ENCODE measurements at regions of chr13 and their contacts with region 1.

Region 1: GRCh38 chr13:97855570-97856303 is 97.7 kb upstream of the IPO5 start:
- DNase-seq: peak; percentile 37
- H3K4me3 ChIP-seq: no peak overlapping the region
- H3K27ac ChIP-seq: no peak overlapping the region
- H3K4me1 ChIP-seq: no peaks in the 10 kb centered on the region
- H3K27me3 ChIP-seq: no peaks in the 10 kb centered on the region
- CTCF ChIP-seq: peak; percentile 64

Region 2: DNA sequence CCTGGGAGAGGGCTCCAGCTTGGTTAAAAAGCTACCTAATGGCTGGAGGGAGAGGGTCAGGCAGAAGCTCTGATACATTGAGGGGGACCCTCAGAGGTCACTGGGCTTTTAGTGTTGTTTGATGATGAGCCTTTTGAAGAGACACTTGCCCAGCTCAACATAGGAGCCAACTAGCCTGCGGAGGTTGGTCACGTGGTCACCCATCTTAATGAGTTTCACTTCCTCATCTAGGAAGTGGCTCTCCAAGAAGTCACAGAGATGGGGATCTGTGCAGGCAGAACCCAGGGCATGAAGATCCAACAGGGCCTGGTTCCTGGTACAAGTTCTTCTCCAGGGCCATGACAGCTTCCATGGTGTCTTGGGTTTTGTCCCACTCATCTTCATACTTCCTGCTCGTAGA is 131.1 kb after region 1 on chr13:
- intact Hi-C with region 1: no loop called
- DNase-seq: no peak
- H3K4me3 ChIP-seq: no peak overlapping the region
- H3K27ac ChIP-seq: no peak overlapping the region
- H3K4me1 ChIP-seq: no peaks in the 10 kb centered on the region
- H3K27me3 ChIP-seq: no peaks in the 10 kb centered on the region
- CTCF ChIP-seq: no peak

Region 3: GRCh38 chr13:98133946-98134345 is 278.2 kb after region 1 on chr13:
- intact Hi-C with region 1: loop called (anchors 10 kb)
- DNase-seq: no peak
- H3K4me3 ChIP-seq: no peak overlapping the region
- H3K27ac ChIP-seq: no peak overlapping the region
- H3K4me1 ChIP-seq: no peaks in the 10 kb centered on the region
- H3K27me3 ChIP-seq: no peaks in the 10 kb centered on the region
- CTCF ChIP-seq: no peak

Region 4: DNA sequence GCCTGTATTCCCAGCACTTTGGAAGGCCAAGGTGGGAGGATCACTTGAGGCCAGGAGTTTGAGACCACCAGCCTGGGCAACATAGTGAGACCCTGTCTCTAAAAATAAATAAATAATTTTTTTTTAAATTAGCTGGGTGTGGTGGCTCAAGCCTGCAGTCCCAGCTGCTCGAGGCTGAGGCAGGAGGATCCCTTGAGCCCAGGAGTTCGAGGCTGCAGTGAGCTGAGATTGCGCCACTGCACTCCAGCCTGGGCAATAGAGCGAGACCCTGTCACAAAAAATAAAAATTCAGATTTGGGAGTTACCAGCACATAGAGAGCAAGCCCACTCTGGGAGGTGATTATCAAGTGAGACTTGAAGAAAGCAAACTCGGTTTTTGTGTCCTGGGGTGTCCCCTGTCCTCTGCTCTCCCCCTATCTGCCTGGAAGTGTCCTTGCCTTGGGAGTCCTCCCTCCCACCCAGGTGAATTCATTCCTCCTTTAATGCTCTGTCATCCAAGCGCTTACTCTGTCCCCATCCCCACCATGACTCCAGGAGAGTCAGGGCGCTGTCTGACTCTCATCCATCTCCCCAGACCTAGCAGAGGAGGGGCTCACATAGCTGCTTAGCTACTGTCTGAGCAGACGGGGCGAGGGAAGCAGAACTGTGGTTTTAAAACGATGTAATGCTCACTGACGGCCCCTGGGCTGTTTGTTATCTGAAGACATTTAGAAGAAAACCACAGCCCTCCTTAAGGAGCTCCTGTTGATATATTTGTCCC is 574.4 kb after region 1 on chr13:
- intact Hi-C with region 1: loop called (anchors 10 kb)
- DNase-seq: no peak
- H3K4me3 ChIP-seq: no peak overlapping the region
- H3K27ac ChIP-seq: no peak overlapping the region
- H3K4me1 ChIP-seq: peaks cover 3% of the 10 kb centered on the region
- H3K27me3 ChIP-seq: no peaks in the 10 kb centered on the region
- CTCF ChIP-seq: no peak

Region 5: GRCh38 chr13:98672944-98673545 is 817.3 kb after region 1 on chr13:
- intact Hi-C with region 1: loop called (anchors 5 kb)
- DNase-seq: peak; percentile 72
- H3K4me3 ChIP-seq: no peak overlapping the region
- H3K27ac ChIP-seq: no peak overlapping the region
- H3K4me1 ChIP-seq: no peaks in the 10 kb centered on the region
- H3K27me3 ChIP-seq: no peaks in the 10 kb centered on the region
- CTCF ChIP-seq: peak; percentile 87

Region 6: DNA sequence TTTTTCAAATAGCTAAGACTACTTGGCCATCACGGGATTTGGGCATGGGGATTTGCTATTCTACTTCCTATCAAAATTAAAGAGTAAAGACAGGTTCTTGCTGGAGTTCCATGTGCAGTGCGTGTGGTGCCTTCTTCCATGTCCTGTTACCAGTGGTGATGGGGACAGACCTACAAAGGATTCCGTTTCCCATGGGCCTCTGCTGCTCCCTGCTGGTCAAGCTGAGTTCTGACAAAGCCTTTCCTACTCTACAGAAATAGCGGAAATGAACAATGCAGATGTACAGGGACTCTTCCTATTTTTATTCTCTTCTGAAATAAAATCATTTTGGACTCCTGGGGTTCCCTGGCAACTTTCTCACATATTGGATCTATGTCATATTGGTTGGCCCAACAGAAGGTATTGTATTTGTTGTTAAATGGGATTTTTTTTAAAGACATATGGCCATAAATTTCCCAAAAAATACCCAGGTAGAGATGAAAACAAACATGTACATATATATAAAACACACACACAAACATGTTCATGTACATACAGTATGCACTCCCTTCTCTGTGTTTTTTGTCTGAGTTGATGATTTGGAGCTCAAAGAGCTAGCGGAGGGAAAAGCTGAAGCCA is 987.2 kb after region 1 on chr13:
- intact Hi-C with region 1: loop called (anchors 10 kb)
- DNase-seq: peak; percentile 72
- H3K4me3 ChIP-seq: no peak overlapping the region
- H3K27ac ChIP-seq: no peak overlapping the region
- H3K4me1 ChIP-seq: no peaks in the 10 kb centered on the region
- H3K27me3 ChIP-seq: no peaks in the 10 kb centered on the region
- CTCF ChIP-seq: peak; percentile 73